ENCODE measurements at regions of chr7 and their contacts with region 1.

Region 1: DNA sequence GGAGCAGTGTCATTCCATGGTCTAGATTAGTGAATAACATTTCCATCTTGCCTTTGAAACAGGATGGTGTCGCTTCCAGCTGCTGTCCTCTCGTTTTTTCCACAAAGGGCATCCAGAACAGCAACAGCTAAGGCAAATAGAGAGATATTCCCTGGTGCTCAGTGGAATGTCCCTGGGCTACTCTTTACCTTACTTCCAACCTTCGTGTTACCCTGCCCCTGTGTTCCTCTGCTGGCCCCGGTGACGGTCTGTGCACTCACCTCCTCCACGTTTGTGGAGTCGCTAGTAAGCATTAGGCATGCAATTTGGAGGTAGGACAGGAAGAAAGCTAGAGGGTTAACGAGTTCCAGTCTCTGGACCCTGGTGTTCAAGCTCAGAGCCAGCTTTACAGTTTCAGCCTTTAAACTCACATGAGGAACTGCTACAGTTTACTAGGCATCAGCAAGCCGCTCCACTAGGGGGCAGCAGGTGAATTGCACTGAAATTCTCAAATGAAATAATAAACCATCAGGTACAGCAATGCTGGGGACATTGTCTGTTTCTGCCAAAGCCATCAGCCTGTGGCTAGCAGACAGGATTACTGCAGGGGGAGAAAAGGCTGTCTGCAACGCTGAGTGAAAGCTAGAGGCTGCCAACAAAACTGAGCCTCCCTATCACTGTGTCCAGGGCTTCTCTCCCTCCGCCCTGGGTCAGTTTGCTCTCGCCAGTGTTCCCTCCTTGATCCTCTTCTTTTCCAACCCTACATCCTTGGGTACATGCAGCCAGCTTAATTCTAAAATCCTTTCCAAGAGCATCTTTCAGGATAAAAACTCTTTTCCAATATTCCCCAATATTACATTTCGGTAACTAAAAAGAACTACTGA is 9.0 kb downstream of the MRPL32 start:
- DNase-seq: peak; percentile 51
- CTCF ChIP-seq: peak; percentile 82

Region 2: DNA sequence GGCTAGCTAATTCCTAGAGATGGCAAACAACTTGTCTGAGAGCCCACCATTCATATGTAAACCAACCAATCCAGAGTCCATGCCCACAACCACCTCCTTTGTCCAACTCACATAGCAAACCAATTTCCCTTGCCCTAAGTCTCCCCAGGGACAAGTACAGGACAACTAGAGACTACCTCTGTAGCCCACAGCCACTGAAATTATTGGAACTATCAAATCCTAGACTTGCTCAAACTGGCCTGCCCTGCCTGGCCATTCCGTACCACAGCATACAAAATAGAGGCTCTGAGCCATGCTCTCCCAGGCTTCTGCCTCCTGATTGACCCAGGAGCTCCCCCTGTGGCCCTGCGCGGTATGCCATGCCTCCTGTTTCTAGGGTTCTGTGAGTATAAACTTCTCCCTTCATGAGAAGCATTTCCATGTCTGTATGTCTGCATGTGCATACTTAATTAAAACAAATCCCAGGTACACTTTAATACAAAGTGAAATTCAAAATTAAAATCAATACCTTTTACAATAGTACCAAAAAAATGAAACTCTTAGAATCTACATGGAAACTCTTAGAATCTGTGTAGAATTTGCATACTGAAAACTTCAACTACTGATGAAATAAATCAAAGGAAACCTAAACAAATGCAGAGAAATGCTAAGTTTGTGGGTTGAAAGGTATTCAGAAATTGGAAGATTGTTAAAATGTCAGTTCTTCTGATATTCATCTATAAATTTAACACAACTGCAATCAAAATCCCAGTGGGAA is 167.2 kb after region 1 on chr7:
- in situ Hi-C with region 1: loop called (anchors 10 kb)
- DNase-seq: peak; percentile 58
- CTCF ChIP-seq: peak; percentile 86

Region 3: DNA sequence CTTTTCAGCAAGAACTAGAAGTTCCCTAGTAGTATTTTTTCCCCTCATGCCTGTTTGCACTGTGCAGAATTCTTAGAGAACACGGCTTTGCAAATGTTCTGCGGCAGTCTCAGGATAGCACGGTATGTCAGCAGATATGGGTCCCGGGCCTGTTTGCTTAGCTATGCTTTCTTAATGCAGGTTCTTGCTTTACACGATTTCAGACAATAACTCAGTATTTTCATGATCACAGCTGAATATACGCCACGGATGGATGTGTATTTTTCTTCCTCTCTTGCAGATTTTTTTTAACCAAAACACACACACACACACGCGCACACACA is 308.6 kb after region 1 on chr7:
- in situ Hi-C with region 1: loop called (anchors 10 kb)
- DNase-seq: no peak
- CTCF ChIP-seq: no peak

Measured in GM13976 (cell line).